Activated CD8-positive, alpha-beta T cell treated with anti-CD3 and anti-CD28 coated beads for 36 hours (primary cell): ENCODE measurements at regions of chr9 and their contacts with region 1.

Region 1: GRCh38 chr9:2857564-2858198 is 13.8 kb upstream of the PUM3 start:
- DNase-seq: peak; percentile 84
- ATAC-seq: peak; percentile 94
- H3K4me3 Mint-ChIP-seq: no peak overlapping the region
- H3K27ac Mint-ChIP-seq: no peak overlapping the region
- H3K4me1 Mint-ChIP-seq: peaks cover 4% of the 10 kb centered on the region
- H3K27me3 Mint-ChIP-seq: peaks cover 23% of the 10 kb centered on the region
- CTCF ChIP-seq: peak; percentile 84

Region 2: GRCh38 chr9:2838371-2839000 is 19.2 kb before region 1 on chr9:
- CTCF ChIA-PET with region 1: interaction called, 14 read pairs
- POLR2A ChIA-PET with region 1: no interaction called
- intact Hi-C with region 1: no loop called
- DNase-seq: no peak
- ATAC-seq: no peak
- H3K4me3 Mint-ChIP-seq: no peak overlapping the region
- H3K27ac Mint-ChIP-seq: peak overlapping the region; percentile 61
- H3K4me1 Mint-ChIP-seq: peaks cover 20% of the 10 kb centered on the region
- H3K27me3 Mint-ChIP-seq: no peaks in the 10 kb centered on the region
- CTCF ChIP-seq: no peak

Region 3: GRCh38 chr9:2872257-2872935 is 14.7 kb after region 1 on chr9:
- CTCF ChIA-PET with region 1: interaction called, 23 read pairs
- POLR2A ChIA-PET with region 1: no interaction called
- intact Hi-C with region 1: no loop called
- DNase-seq: no peak
- ATAC-seq: no peak
- H3K4me3 Mint-ChIP-seq: no peak overlapping the region
- H3K27ac Mint-ChIP-seq: no peak overlapping the region
- H3K4me1 Mint-ChIP-seq: no peaks in the 10 kb centered on the region
- H3K27me3 Mint-ChIP-seq: peaks cover 15% of the 10 kb centered on the region
- CTCF ChIP-seq: no peak

Region 4: GRCh38 chr9:3181049-3181953 is 323.6 kb after region 1 on chr9:
- CTCF ChIA-PET with region 1: interaction called, 33 read pairs
- POLR2A ChIA-PET with region 1: no interaction called
- intact Hi-C with region 1: loop called (anchors 1 kb)
- DNase-seq: peak; percentile 71
- ATAC-seq: peak; percentile 86
- H3K4me3 Mint-ChIP-seq: peak overlapping the region; percentile 51
- H3K27ac Mint-ChIP-seq: no peak overlapping the region
- H3K4me1 Mint-ChIP-seq: peaks cover 2% of the 10 kb centered on the region
- H3K27me3 Mint-ChIP-seq: peaks cover 36% of the 10 kb centered on the region
- CTCF ChIP-seq: peak; percentile 31